ENCODE measurements at regions of chr3 and their contacts with region 1.

Region 1: GRCh38 chr3:196502775-196503195 is 783 bp downstream of the RNF168 start:
- DNase-seq: peak; percentile 64
- H3K4me3 Mint-ChIP-seq: peak overlapping the region; percentile 100
- H3K27ac Mint-ChIP-seq: peak overlapping the region; percentile 100
- H3K4me1 Mint-ChIP-seq: peaks cover 38% of the 10 kb centered on the region
- H3K27me3 Mint-ChIP-seq: peaks cover 8% of the 10 kb centered on the region

Region 2: GRCh38 chr3:195823998-195824397 is 678.8 kb before region 1 on chr3:
- intact Hi-C with region 1: no loop called
- DNase-seq: no peak
- H3K4me3 Mint-ChIP-seq: no peak overlapping the region
- H3K27ac Mint-ChIP-seq: no peak overlapping the region
- H3K4me1 Mint-ChIP-seq: no peaks in the 10 kb centered on the region
- H3K27me3 Mint-ChIP-seq: peaks cover 8% of the 10 kb centered on the region

Region 3: GRCh38 chr3:196081791-196082618 is 420.8 kb before region 1 on chr3 and contains the start of gene TFRC:
- intact Hi-C with region 1: loop called (anchors 2 kb)
- DNase-seq: peak; percentile 95
- H3K4me3 Mint-ChIP-seq: peak within 1 kb of the TSS; percentile 100
- H3K27ac Mint-ChIP-seq: peak within 1 kb of the TSS; percentile 98
- H3K4me1 Mint-ChIP-seq: peaks cover 38% of the 10 kb centered on the region
- H3K27me3 Mint-ChIP-seq: no peaks in the 10 kb centered on the region
- total RNA-seq, gene TFRC: 791 TPM in 2 replicates

Region 4: DNA sequence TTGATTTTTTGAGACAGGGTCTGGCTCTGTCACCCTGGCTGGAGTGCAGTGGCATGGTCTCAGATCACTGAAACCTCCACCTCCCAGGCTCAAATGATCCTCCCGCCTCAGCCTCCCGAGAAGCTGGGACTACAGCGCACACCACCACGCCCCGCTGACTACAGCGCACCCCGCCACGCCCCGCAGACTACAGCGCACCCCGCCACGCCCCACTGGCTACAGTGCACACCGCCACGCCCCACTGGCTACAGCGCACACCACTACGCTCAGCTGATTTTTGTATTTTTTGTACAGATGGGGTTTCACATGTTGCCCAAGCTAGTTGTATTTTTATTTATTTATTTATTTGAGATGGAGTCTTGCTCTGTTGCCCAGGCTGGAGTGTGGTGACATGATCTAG is 250.9 kb before region 1 on chr3:
- intact Hi-C with region 1: loop called (anchors 1 kb)
- DNase-seq: no peak
- H3K4me3 Mint-ChIP-seq: no peak overlapping the region
- H3K27ac Mint-ChIP-seq: no peak overlapping the region
- H3K4me1 Mint-ChIP-seq: peaks cover 10% of the 10 kb centered on the region
- H3K27me3 Mint-ChIP-seq: no peaks in the 10 kb centered on the region

Region 5: GRCh38 chr3:196317687-196318467 is 184.9 kb before region 1 on chr3 and contains the start of gene DYNLT2B:
- intact Hi-C with region 1: loop called (anchors 1 kb)
- DNase-seq: peak; percentile 87
- H3K4me3 Mint-ChIP-seq: peak within 1 kb of the TSS; percentile 95
- H3K27ac Mint-ChIP-seq: peak within 1 kb of the TSS; percentile 98
- H3K4me1 Mint-ChIP-seq: peaks cover 7% of the 10 kb centered on the region
- H3K27me3 Mint-ChIP-seq: no peaks in the 10 kb centered on the region
- total RNA-seq, gene DYNLT2B: 11.6 and 12.7 TPM in 2 replicates

Region 6: DNA sequence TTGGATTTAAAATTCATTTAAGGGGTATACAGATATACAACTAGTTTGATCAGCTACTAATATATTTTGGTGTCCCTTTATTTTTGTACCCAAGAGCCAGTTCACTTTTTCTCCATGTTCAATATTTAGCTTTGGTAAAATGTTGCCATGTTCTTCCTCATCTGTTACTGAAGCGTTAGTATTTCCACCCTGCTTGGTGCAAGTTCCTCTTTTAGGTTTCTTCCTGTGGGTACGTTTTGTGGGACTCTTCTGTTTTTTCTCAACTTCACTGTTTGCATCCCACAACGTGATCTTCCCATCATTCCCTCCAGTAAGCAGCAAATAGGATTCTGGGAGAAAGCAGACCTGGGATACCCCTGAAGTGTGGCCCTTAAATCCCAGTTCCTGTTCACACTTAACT is 51.4 kb after region 1 on chr3:
- intact Hi-C with region 1: no loop called
- DNase-seq: no peak
- H3K4me3 Mint-ChIP-seq: no peak overlapping the region
- H3K27ac Mint-ChIP-seq: no peak overlapping the region
- H3K4me1 Mint-ChIP-seq: no peaks in the 10 kb centered on the region
- H3K27me3 Mint-ChIP-seq: no peaks in the 10 kb centered on the region

Region 7: GRCh38 chr3:196568246-196569002 is 65.6 kb after region 1 on chr3 and contains the starts of genes FBXO45 and WDR53:
- intact Hi-C with region 1: loop called (anchors 1 kb)
- DNase-seq: peak; percentile 94
- H3K4me3 Mint-ChIP-seq: peak within 1 kb of the TSS; percentile 96
- H3K27ac Mint-ChIP-seq: peak within 1 kb of the TSS; percentile 95
- H3K4me1 Mint-ChIP-seq: peaks cover 44% of the 10 kb centered on the region
- H3K27me3 Mint-ChIP-seq: no peaks in the 10 kb centered on the region
- total RNA-seq, gene FBXO45: 22.8 and 24.3 TPM in 2 replicates
- total RNA-seq, gene WDR53: 24.8 and 25.5 TPM in 2 replicates

Region 8: DNA sequence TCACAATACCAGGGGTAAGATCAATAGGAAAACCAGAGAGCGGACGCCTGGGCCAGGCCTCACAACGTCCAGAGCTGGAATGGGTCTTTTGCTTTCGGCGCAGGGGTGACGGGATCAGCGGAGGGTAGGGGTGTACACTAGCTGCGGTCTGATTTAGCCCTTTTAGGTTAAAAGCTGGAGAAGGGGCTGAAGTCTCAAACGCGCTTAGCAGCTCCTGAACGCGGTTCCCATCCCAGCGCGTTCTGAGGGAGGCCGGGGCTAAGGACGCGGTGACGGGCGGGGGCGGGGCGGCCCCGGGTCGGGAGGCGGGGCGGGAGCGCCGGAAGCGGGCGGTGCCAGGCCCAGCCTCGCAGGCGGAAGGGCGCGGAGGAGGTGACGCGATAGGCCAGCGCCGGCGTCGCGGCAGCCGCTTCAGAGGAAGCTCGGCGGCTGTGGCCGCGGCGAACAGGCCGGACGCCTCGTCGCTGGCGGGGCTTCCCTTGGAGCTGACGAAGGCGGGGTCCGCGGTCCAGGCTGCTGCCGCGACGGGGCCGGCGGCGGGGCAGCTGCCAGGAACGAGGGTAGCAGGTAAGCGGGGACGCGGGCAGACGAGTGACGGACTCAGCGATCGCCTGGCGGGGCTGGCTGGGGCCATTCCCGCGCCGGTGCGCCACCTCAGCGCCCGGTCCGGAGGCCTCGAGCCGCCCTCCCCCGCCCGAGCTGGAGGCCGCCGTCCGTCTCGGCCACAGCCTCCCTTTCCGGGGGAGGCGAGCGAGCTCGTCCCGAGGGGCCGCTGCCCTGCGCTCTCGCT is 364.9 kb after region 1 on chr3 and contains the start of gene SENP5:
- intact Hi-C with region 1: loop called (anchors 1 kb)
- DNase-seq: peak; percentile 86
- H3K4me3 Mint-ChIP-seq: peak within 1 kb of the TSS; percentile 100
- H3K27ac Mint-ChIP-seq: peak within 1 kb of the TSS; percentile 98
- H3K4me1 Mint-ChIP-seq: peaks cover 12% of the 10 kb centered on the region
- H3K27me3 Mint-ChIP-seq: peaks cover 4% of the 10 kb centered on the region
- total RNA-seq, gene SENP5: 45.3 and 50.7 TPM in 2 replicates